ENCODE measurements at regions of chr12 and their contacts with region 1.

Region 1: DNA sequence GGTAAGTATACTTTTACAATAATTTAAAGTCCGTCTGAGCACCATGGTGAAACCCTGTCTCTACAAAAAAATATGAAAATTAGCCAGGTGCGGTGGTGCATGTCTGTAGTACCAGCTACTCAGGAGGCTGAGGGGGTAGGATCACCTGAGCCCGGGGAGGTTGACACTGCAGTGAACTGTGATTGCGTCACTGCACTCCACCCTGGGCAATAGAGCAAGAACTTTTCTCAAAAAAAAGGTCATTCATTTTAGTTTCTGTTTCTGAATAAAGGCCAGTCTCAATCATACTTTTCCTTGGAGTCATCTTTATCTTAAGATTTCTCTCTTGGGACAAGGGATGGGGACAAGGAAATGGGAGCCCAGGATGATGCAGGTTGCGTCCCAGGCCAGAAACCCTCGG is 12.9 kb downstream of the ANKRD13A start:
- DNase-seq: peak; percentile 60
- ATAC-seq: peak; percentile 90
- H3K4me3 Mint-ChIP-seq: peak overlapping the region; percentile 84
- H3K27ac Mint-ChIP-seq: peak overlapping the region; percentile 95
- H3K4me1 Mint-ChIP-seq: peaks cover 80% of the 10 kb centered on the region
- H3K27me3 Mint-ChIP-seq: no peaks in the 10 kb centered on the region
- CTCF ChIP-seq: no peak

Region 2: GRCh38 chr12:109934026-109934425 is 78.1 kb before region 1 on chr12:
- CTCF ChIA-PET with region 1: no interaction called
- POLR2A ChIA-PET with region 1: no interaction called
- intact Hi-C with region 1: loop called (anchors 1 kb)
- DNase-seq: no peak
- ATAC-seq: no peak
- H3K4me3 Mint-ChIP-seq: no peak overlapping the region
- H3K27ac Mint-ChIP-seq: no peak overlapping the region
- H3K4me1 Mint-ChIP-seq: no peaks in the 10 kb centered on the region
- H3K27me3 Mint-ChIP-seq: no peaks in the 10 kb centered on the region
- CTCF ChIP-seq: no peak

Region 3: DNA sequence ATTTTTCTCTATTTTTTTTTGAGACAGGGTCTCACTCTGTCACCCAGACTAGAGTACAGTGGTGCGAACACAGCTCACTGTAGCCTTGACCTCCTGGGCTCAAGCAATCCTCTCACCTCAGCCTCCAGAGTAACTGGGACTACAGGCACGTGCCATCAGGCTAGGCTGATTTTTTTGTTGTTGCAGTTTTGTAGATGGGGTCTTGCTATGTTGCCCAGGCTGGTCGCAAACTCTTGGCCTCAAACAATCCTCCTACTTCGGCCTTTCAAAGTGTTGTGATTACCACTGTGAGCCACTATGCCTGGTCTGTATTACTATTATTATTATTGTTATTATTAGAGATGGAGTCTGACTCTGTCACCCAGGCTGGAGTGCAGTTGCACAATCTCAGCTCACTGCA is 39.3 kb before region 1 on chr12:
- CTCF ChIA-PET with region 1: no interaction called
- POLR2A ChIA-PET with region 1: interaction called, 5 read pairs
- intact Hi-C with region 1: loop called (anchors 1 kb)
- DNase-seq: no peak
- ATAC-seq: no peak
- H3K4me3 Mint-ChIP-seq: no peak overlapping the region
- H3K27ac Mint-ChIP-seq: peak overlapping the region; percentile 92
- H3K4me1 Mint-ChIP-seq: peaks cover 19% of the 10 kb centered on the region
- H3K27me3 Mint-ChIP-seq: no peaks in the 10 kb centered on the region
- CTCF ChIP-seq: no peak

Region 4: DNA sequence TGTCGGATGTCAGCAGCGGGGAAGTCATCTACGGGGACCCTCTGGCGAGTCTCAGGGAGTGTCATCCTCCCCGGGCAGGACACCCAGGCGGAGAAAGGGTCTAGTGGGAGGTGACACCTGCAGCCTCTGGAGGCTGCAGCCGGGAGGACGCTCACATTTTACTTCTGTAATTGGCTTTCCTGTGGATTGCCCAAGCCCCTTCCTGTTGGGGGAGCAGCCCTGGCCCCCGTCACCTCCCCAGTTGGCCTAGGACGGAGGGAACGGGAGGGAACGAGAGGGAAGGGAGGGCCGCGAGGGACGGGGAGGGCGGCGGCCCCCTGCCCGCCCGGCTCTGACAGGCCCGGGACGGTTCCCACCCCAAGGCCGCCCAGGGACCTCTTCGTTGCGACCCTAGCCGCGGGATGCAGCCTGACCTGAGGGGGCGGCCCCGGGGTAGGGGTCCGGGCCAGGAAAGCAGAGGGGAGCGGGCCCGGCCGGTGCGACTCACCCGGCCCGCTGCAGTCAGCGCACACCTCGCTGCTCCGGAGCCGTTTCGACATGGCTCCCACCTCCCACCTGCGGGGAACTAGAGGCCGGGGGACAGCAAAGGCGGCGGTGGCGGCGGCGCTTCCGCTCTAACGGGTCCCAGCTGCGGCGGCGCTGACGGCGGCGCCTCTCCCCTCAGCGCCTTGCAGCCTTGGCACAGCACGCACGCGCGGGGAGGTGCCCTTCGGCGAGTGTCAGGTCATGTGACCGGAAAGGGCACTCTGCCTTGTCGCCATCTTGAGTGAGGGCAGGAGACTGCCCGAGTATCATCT is 16.3 kb before region 1 on chr12 and contains the start of gene GIT2:
- CTCF ChIA-PET with region 1: interaction called, 12 read pairs
- POLR2A ChIA-PET with region 1: interaction called, 251 read pairs
- intact Hi-C with region 1: loop called (anchors 1 kb)
- DNase-seq: peak; percentile 86
- ATAC-seq: peak; percentile 72
- H3K4me3 Mint-ChIP-seq: peak within 1 kb of the TSS; percentile 96
- H3K27ac Mint-ChIP-seq: peak within 1 kb of the TSS; percentile 95
- H3K4me1 Mint-ChIP-seq: peaks cover 80% of the 10 kb centered on the region
- H3K27me3 Mint-ChIP-seq: no peaks in the 10 kb centered on the region
- CTCF ChIP-seq: no peak
- total RNA-seq, gene GIT2: 89.2 and 107 TPM in 2 replicates

Region 5: GRCh38 chr12:110193196-110193595 is 181.1 kb after region 1 on chr12:
- CTCF ChIA-PET with region 1: no interaction called
- POLR2A ChIA-PET with region 1: no interaction called
- intact Hi-C with region 1: no loop called
- DNase-seq: no peak
- ATAC-seq: no peak
- H3K4me3 Mint-ChIP-seq: no peak overlapping the region
- H3K27ac Mint-ChIP-seq: no peak overlapping the region
- H3K4me1 Mint-ChIP-seq: no peaks in the 10 kb centered on the region
- H3K27me3 Mint-ChIP-seq: no peaks in the 10 kb centered on the region
- CTCF ChIP-seq: no peak

Region 6: DNA sequence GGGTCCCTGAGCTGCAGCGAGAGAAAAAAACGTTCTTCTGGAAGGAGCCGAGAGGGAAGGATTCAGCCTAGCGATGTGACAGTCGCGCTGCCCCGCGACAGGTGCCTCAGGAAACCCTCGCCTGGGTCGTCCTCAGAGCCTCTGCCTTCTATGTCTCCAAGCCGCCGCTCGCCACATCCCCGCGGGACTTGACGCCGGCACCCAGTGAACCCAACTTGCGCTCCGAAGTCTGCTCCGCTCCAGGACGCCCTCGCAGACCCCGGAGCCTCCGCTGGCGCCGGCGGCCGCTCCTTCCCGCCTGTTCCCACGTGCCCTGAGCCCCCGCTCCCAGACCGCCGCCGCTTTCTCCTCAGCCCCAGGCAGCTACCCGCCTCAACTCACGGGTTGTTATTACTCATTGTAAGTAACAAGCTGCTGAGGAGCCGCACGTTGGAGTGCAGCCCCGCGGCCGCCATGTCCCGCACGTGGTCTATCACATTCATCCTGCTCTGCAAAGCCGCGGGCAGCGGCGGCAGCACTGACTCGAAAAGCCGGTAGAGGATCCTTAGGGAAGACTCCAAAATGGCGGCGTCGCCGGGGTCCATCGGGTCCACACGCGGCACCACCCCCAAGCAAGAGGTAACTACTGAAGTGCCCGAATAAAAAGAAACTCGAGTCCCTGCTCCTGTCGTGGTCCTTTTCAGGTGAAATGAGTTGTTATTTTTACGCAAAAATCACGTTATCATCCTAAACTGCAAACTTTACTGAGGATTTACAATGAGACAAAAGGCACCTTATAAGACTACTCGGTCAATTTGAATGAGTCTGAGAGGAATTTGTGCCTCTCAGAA is 391.2 kb after region 1 on chr12 and contains the start of gene ANAPC7:
- CTCF ChIA-PET with region 1: no interaction called
- POLR2A ChIA-PET with region 1: no interaction called
- intact Hi-C with region 1: loop called (anchors 1 kb)
- DNase-seq: peak; percentile 73
- ATAC-seq: peak; percentile 94
- H3K4me3 Mint-ChIP-seq: peak within 1 kb of the TSS; percentile 99
- H3K27ac Mint-ChIP-seq: peak within 1 kb of the TSS; percentile 99
- H3K4me1 Mint-ChIP-seq: peaks cover 33% of the 10 kb centered on the region
- H3K27me3 Mint-ChIP-seq: no peaks in the 10 kb centered on the region
- CTCF ChIP-seq: no peak
- total RNA-seq, gene ANAPC7: 69.8 and 76.2 TPM in 2 replicates